IMR-90 (cell line): ENCODE measurements at regions of chr10 and their contacts with region 1.

Region 1: DNA sequence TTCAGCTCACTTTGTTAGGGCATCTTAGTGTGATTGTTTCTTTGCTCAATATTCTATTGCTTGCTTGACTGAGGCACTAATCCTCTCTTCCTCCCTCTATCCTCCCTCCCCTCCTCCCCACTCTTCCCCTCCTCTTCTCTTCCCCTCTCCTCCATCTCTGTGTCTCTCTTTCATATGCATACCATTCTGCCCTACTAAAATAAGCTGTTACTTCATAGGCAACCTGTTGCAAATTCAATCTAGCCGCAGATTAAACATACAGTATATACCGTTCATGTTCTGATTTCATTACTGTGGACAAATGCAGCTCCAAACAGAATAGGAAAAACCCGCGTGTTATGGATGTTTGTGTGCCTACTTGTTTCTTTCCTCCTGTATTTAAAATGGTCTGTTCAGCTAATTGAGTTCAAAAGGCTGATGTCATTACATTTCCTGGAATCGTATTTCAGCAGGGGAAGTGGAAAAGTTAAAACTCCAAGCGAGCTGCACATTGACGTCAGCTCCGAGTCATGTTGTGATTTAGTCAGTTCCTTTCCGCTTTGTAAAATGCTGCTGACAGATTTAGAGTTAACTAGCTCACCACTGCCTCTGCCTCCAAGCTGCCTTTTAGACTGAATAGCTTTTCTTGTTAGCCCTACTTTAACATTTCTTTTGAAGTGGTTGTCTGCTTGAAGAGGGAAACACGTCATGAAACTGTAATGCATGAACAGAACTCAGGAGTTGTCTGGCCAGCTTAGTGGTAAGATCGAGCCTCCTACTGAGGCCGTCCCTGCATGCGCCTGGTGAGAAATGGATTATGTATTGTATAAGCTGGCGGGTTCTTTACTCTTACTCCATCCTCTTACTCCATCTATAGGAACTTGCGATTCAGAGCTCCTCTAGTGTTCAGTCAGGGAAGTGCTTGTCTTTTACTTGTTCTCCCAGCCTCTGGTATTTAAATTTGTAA is 69.0 kb downstream of the CREM start:
- DNase-seq: peak; percentile 99
- ATAC-seq: peak; percentile 92
- H3K4me3 ChIP-seq: peak overlapping the region; percentile 44
- H3K27ac ChIP-seq: peak overlapping the region; percentile 91
- H3K4me1 ChIP-seq: peaks cover 5% of the 10 kb centered on the region
- H3K27me3 ChIP-seq: no peaks in the 10 kb centered on the region
- CTCF ChIP-seq: peak; percentile 83
- POLR2A ChIP-seq: peak; percentile 70
- RAD21 ChIP-seq: peak; percentile 62

Region 2: DNA sequence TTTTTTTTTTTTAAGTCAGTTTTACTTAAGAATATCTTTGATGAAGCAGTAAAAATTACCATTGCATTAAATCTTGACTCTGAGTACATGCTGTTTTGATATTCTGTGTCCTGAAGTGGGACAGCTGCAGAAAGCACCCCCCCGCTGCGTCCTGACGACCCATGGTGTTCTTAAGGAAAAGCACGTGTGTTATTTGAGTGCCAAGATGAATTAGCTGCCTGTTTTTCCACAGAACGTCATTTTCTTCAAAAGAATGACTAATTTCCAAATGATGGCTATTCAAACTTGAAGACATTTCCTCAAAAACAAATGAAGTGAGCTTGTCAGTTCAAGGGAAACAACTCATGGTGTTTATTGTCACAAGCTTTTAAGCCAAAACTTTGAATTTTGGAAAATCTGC is 23.1 kb before region 1 on chr10:
- CTCF ChIA-PET with region 1: interaction called, 11 read pairs
- POLR2A ChIA-PET with region 1: interaction called, 3 read pairs
- dilution Hi-C with region 1: no loop called
- in situ Hi-C with region 1: no loop called
- intact Hi-C with region 1: no loop called
- DNase-seq: peak; percentile 41
- ATAC-seq: no peak
- H3K4me3 ChIP-seq: no peak overlapping the region
- H3K27ac ChIP-seq: no peak overlapping the region
- H3K4me1 ChIP-seq: peaks cover 6% of the 10 kb centered on the region; the same call in 1 of the 2 replicates
- H3K27me3 ChIP-seq: no peaks in the 10 kb centered on the region
- CTCF ChIP-seq: no peak
- POLR2A ChIP-seq: no peak
- RAD21 ChIP-seq: no peak

Region 3: DNA sequence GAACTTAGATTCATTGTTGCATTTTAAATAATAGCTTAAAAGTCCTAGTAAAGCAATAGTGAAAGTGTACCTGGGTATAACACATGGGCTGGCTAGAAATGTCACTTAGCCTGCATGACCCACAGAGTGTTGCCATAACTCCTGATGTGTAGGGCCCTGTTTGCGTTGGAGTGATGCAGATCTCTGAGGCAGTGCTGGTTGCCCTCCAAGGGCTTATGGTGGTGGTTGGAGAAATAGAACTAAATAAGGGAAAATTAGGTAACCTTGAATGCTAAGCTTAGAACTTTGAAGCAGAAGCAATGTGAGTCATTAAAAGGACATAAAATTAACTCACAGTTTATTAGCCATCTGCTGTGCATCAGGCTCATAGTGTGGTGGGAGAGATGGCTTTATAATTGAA is 246.4 kb after region 1 on chr10:
- CTCF ChIA-PET with region 1: no interaction called
- POLR2A ChIA-PET with region 1: no interaction called
- dilution Hi-C with region 1: no loop called
- in situ Hi-C with region 1: no loop called
- intact Hi-C with region 1: no loop called
- DNase-seq: peak; percentile 46
- ATAC-seq: peak; percentile 35; the same call in 1 of the 2 replicates
- H3K4me3 ChIP-seq: no peak overlapping the region
- H3K27ac ChIP-seq: no peak overlapping the region
- H3K4me1 ChIP-seq: no peaks in the 10 kb centered on the region; the same call in 1 of the 2 replicates
- H3K27me3 ChIP-seq: no peaks in the 10 kb centered on the region
- CTCF ChIP-seq: no peak
- POLR2A ChIP-seq: no peak
- RAD21 ChIP-seq: no peak